Gastrocnemius medialis (tissue), 4 donors: ENCODE measurements at regions of chr15 and their contacts with region 1.

Region 1: GRCh38 chr15:69652751-69653305 is 200.2 kb downstream of the RPLP1 start:
- DNase-seq: no peak
- ATAC-seq: no peak
- H3K4me3 ChIP-seq: no peak overlapping the region
- H3K27ac ChIP-seq: no peak overlapping the region
- H3K4me1 ChIP-seq: no peaks in the 10 kb centered on the region
- H3K27me3 ChIP-seq: peaks cover 0 to 6% (median 3%) of the 10 kb centered on the region in 3 donors
- CTCF ChIP-seq: no peak
- POLR2A ChIP-seq: no peak

Region 2: GRCh38 chr15:69576035-69576526 is 76.7 kb before region 1 on chr15:
- in situ Hi-C with region 1: no loop called
- intact Hi-C with region 1: loop called (anchors 5 kb)
- DNase-seq: peak in 1 of 2 donors; percentile 39
- ATAC-seq: peak; percentile 78 to 85
- H3K4me3 ChIP-seq: no peak overlapping the region
- H3K27ac ChIP-seq: no peak overlapping the region
- H3K4me1 ChIP-seq: no peaks in the 10 kb centered on the region
- H3K27me3 ChIP-seq: no peaks in the 10 kb centered on the region
- CTCF ChIP-seq: peak; percentile 60 to 78 (median 71)
- POLR2A ChIP-seq: no peak

Region 3: GRCh38 chr15:69697916-69698315 is 45.1 kb after region 1 on chr15:
- in situ Hi-C with region 1: no loop called
- intact Hi-C with region 1: no loop called
- DNase-seq: no peak
- ATAC-seq: no peak
- H3K4me3 ChIP-seq: no peak overlapping the region
- H3K27ac ChIP-seq: no peak overlapping the region
- H3K4me1 ChIP-seq: peaks cover 0 to 9% of the 10 kb centered on the region in 2 donors
- H3K27me3 ChIP-seq: no peaks in the 10 kb centered on the region
- CTCF ChIP-seq: no peak
- POLR2A ChIP-seq: no peak